ENCODE measurements at regions of chr2 and their contacts with region 1.

Region 1: DNA sequence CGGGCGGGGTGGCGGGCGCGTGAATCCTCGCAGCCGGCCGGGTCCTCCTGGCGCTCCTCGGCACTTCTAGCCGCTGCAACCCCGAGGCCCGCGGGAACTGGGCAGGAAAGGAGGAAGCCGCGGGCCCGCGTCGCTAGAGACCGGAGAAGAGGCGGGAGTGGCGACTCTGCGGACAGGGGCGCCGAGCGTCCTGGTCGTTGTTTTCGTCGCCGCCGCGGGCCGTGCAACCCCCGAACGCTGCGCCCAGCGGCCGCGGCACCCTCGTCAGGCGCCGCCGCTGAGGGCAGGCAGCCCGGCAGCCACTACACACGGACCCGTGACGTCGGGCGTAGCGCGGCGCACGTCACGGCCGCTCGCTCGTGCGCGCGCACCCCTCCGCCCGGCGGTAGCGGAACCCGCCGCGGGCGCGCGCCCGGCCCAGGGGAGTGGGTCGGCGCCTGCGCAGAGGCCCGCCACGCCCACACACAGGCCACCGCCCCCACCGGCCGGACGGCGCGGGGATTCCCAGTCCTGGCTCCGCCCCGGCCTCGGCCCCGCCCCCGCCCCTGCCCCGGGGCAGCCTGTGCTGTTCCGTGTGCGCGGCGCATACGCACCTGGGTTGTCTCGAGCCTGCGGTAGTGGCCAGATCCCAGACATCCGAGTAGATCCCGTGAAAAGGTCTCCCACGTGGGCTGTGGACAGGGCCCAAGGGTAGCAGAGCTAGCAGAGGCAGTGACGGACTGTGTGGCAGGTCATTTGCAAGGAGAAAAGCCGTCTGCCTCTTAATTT is at the start of gene MAP3K2:
- H3K4me3 Mint-ChIP-seq: peak within 1 kb of the TSS; percentile 82
- H3K27ac Mint-ChIP-seq: peak within 1 kb of the TSS; percentile 97
- H3K4me1 Mint-ChIP-seq: peaks cover 72% of the 10 kb centered on the region
- H3K27me3 Mint-ChIP-seq: no peaks in the 10 kb centered on the region

Region 2: DNA sequence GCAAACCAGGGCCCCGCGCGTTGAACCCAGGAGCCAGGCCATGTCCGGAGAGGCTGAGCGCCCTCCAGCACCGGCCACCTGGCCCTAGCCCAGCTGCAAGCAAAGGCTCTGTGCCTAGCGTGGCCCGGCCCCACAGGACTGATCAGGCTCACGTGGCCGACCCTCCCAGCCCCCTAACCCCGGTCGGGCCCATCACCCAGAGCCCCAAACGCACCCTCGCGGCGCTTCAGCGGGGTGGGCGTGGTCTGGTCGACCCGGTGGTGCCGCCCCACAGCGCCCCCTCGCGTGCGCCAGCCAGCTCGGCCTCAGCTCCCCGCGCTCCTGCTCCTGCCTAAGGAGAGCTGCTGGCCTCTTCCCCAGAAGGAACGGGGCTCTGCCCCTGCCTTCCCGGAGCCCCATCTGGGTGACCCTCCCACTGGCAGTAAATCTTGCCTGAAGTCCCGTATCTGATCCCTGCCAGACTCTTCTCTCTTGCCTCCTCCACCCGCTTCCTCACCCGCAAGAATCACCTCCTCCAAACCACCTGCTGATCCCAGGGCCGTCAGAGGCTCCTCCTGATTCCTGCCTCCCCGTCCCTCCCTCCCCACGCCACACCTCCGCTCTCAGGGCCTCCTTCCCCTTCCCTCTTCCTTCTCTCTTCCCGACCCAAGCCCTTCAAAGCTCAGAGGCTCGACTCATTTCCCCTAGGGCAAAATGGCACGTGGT is 501.5 kb before region 1 on chr2:
- intact Hi-C with region 1: no loop called
- H3K4me3 Mint-ChIP-seq: peak overlapping the region; percentile 66
- H3K27ac Mint-ChIP-seq: peak overlapping the region; percentile 8
- H3K4me1 Mint-ChIP-seq: peaks cover 9% of the 10 kb centered on the region
- H3K27me3 Mint-ChIP-seq: peaks cover 7% of the 10 kb centered on the region

Region 3: GRCh38 chr2:127404466-127405254 is 16.8 kb after region 1 on chr2:
- intact Hi-C with region 1: loop called (anchors 2 kb)
- H3K4me3 Mint-ChIP-seq: peak overlapping the region; percentile 13
- H3K27ac Mint-ChIP-seq: peak overlapping the region; percentile 80
- H3K4me1 Mint-ChIP-seq: peaks cover 69% of the 10 kb centered on the region
- H3K27me3 Mint-ChIP-seq: no peaks in the 10 kb centered on the region

Region 4: DNA sequence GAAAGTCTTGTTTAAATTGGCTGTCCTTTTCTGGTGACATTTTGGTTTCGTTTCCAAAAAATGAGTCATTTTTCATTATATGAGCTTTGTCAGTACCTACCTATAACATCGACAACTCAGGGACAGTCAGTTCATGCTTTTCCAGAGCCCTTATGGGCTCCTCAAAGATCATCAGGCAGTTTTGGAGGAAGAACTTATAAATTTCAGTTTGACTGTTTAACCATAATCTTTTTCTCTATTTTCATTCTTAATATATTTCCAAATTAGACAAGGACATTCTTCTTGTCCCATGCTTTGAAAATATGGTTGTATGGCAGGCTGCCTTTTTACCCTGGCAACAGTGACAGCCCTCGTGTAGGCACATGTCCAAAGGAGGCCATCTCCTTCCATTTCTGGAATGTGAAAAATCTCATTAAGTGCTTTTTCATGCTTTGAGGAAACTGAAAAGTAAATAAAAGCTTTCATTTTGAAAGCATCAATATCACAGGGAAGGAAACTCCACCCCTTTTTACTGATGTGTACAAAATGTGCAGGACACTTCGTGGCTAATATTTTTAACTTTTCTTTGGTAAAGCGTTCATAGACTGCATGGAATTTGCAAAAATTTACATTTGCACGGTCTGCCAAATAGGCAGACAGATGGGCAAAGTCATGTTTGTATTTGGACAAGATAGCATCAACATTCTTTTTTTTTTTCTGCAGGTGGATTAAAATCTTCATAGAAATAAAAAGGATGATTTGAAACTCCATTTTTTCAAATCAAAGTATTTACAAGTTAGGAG is 23.2 kb after region 1 on chr2:
- intact Hi-C with region 1: loop called (anchors 2 kb)
- H3K4me3 Mint-ChIP-seq: peak overlapping the region; percentile 9
- H3K27ac Mint-ChIP-seq: peak overlapping the region; percentile 87
- H3K4me1 Mint-ChIP-seq: peaks cover 70% of the 10 kb centered on the region
- H3K27me3 Mint-ChIP-seq: peaks cover 6% of the 10 kb centered on the region

Region 5: DNA sequence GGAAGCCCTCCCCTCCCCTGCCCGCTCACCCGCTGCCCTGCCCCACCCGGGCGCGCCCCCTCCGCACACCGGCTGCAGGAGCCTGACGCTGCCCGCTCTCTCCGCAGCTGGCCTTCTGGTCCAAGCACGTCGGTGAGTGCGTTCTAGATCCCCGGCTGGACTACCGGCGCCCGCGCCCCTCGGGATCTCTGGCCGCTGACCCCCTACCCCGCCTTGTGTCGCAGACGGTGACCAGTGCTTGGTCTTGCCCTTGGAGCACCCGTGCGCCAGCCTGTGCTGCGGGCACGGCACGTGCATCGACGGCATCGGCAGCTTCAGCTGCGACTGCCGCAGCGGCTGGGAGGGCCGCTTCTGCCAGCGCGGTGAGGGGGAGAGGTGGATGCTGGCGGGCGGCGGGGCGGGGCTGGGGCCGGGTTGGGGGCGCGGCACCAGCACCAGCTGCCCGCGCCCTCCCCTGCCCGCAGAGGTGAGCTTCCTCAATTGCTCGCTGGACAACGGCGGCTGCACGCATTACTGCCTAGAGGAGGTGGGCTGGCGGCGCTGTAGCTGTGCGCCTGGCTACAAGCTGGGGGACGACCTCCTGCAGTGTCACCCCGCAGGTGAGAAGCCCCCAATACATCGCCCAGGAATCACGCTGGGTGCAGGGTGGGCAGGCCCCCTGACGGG is 35.1 kb after region 1 on chr2:
- intact Hi-C with region 1: loop called (anchors 1 kb)
- H3K4me3 Mint-ChIP-seq: peak overlapping the region; percentile 77
- H3K27ac Mint-ChIP-seq: peak overlapping the region; percentile 45
- H3K4me1 Mint-ChIP-seq: peaks cover 32% of the 10 kb centered on the region
- H3K27me3 Mint-ChIP-seq: peaks cover 38% of the 10 kb centered on the region